Sciatic nerve (tissue), 2 donors: ENCODE measurements at regions of chr18 and their contacts with region 1.

Region 1: DNA sequence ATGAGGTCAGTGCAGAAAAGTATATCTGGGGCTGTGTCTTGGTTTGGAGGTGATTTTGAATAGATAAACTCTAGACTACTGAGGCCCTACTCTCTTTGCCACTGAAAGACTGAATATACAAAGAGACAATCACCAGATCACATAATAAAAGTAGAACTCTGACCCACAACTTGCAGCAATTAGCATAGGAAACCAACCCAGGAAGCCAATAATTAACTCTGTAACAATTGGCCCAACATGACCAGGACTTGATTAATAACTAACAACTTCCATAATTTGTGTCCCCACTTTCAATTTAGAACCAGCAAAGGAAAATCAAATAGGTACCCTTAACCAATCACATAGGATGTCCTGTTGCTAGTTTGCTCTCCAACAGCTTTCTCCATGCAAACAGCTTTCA is 1104.9 kb upstream of the CELF4 start:
- DNase-seq: no peak
- ATAC-seq: no peak

Region 2: GRCh38 chr18:38611036-38611964 is 59.2 kb before region 1 on chr18:
- intact Hi-C with region 1: loop called (anchors 10 kb)
- DNase-seq: no peak
- ATAC-seq: no peak

Region 3: DNA sequence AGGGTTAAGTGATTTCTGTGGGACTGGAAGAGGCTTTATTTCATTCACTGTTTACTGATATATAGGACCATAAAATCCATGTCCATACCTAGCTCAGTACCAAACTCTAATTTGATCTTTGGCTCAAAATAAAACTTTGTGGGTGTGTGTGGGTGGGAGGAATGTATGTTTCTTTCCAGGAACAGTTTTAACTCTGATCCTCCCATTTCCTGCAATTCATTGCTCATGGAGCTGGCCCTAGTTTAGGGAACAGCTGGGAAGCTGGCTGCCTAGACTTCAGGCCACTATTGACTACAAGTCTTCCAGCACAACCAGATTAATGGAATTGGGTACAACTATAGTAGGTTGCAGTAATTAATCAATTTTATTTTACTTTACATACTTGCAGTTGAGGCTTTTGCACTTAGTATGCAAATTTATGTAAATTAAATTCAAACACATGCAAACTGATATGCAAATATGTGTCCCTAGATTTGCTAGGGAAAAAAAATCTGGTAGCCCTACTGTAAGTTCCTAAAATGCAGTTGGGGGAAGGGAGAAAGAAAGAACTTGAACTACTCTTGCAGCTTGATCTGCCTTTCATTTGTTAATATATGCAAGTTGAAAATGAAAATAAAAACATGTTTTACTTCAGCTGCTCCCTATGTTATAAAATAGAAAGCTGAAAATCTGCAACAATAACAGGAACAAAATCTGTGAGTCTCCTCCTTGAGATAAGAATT is 34.6 kb before region 1 on chr18:
- intact Hi-C with region 1: no loop called
- DNase-seq: no peak
- ATAC-seq: no peak